ENCODE measurements at regions of chr9 and their contacts with region 1.

Region 1: GRCh38 chr9:806285-807156 is 35.0 kb upstream of the DMRT1 start:
- DNase-seq: no peak
- H3K4me3 Mint-ChIP-seq: no peak overlapping the region
- H3K27ac Mint-ChIP-seq: no peak overlapping the region
- H3K4me1 Mint-ChIP-seq: no peaks in the 10 kb centered on the region
- H3K27me3 Mint-ChIP-seq: peaks cover 21% of the 10 kb centered on the region

Region 2: GRCh38 chr9:394347-395052 is 412.0 kb before region 1 on chr9:
- intact Hi-C with region 1: no loop called
- DNase-seq: no peak
- H3K4me3 Mint-ChIP-seq: no peak overlapping the region
- H3K27ac Mint-ChIP-seq: no peak overlapping the region
- H3K4me1 Mint-ChIP-seq: no peaks in the 10 kb centered on the region
- H3K27me3 Mint-ChIP-seq: no peaks in the 10 kb centered on the region

Region 3: GRCh38 chr9:447230-448025 is 359.1 kb before region 1 on chr9:
- intact Hi-C with region 1: loop called (anchors 10 kb)
- DNase-seq: peak; percentile 66
- H3K4me3 Mint-ChIP-seq: no peak overlapping the region
- H3K27ac Mint-ChIP-seq: peak overlapping the region; percentile 51
- H3K4me1 Mint-ChIP-seq: peaks cover 32% of the 10 kb centered on the region
- H3K27me3 Mint-ChIP-seq: no peaks in the 10 kb centered on the region

Region 4: GRCh38 chr9:763692-764524 is 42.6 kb before region 1 on chr9:
- intact Hi-C with region 1: loop called (anchors 2 kb)
- DNase-seq: peak; percentile 51
- H3K4me3 Mint-ChIP-seq: no peak overlapping the region
- H3K27ac Mint-ChIP-seq: no peak overlapping the region
- H3K4me1 Mint-ChIP-seq: peaks cover 24% of the 10 kb centered on the region
- H3K27me3 Mint-ChIP-seq: peaks cover 24% of the 10 kb centered on the region